Prostate gland (tissue), 2 donors: ENCODE measurements at regions of chr6 and their contacts with region 1.

Region 1: GRCh38 chr6:75504465-75505228 is 11.0 kb upstream of the FILIP1 start:
- DNase-seq: no peak
- H3K4me3 ChIP-seq: no peak overlapping the region
- H3K27ac ChIP-seq: no peak overlapping the region
- H3K4me1 ChIP-seq: no peaks in the 10 kb centered on the region
- H3K27me3 ChIP-seq: no peaks in the 10 kb centered on the region
- CTCF ChIP-seq: peak in 1 of 4 experiments; percentile 31
- POLR2A ChIP-seq: no peak

Region 2: GRCh38 chr6:74956559-74957428 is 547.9 kb before region 1 on chr6:
- intact Hi-C with region 1: no loop called
- DNase-seq: no peak
- H3K4me3 ChIP-seq: no peak overlapping the region
- H3K27ac ChIP-seq: no peak overlapping the region
- H3K4me1 ChIP-seq: no peaks in the 10 kb centered on the region
- H3K27me3 ChIP-seq: no peaks in the 10 kb centered on the region
- CTCF ChIP-seq: no peak
- POLR2A ChIP-seq: no peak

Region 3: DNA sequence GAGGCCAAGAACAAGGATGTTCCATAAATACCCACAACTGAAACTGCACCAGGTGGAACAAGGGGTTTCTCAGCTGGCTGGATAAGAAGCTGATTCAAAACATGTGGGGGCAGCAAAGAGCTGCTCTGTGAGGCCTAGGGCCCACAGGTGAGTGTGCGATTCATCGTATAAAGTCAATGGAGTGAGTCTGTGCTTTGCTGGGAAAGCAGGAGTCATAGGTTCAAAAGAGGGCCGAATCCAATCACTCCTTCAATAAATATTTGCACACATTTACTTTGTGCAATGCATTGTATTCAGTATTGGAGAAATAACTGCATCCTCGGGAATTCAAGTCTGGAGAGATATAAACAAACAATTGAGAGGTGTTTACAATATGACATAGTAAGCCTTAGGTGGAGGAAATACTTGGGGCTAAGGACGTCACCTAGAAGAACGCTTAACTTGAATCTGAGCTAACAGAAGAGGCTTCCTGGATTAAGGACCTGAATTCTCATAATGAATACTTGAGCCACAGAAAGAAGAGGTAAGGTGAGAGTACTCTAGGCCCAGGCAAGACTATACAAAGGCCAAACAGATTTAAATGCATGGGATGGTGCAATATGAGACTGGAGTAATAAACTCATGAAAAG is 136.4 kb before region 1 on chr6:
- intact Hi-C with region 1: loop called (anchors 5 kb)
- DNase-seq: no peak
- H3K4me3 ChIP-seq: no peak overlapping the region
- H3K27ac ChIP-seq: no peak overlapping the region
- H3K4me1 ChIP-seq: no peaks in the 10 kb centered on the region
- H3K27me3 ChIP-seq: no peaks in the 10 kb centered on the region
- CTCF ChIP-seq: peak in 2 of 4 experiments; percentile 42 to 50
- POLR2A ChIP-seq: no peak

Region 4: GRCh38 chr6:75922226-75922625 is 417.6 kb after region 1 on chr6:
- intact Hi-C with region 1: no loop called
- DNase-seq: no peak
- H3K4me3 ChIP-seq: no peak overlapping the region
- H3K27ac ChIP-seq: no peak overlapping the region
- H3K4me1 ChIP-seq: no peaks in the 10 kb centered on the region
- H3K27me3 ChIP-seq: no peaks in the 10 kb centered on the region
- CTCF ChIP-seq: no peak
- POLR2A ChIP-seq: no peak